ENCODE measurements at regions of chr6 and their contacts with region 1.

Region 1: GRCh38 chr6:57089687-57090460 is at the start of gene ZNF451:
- DNase-seq: peak; percentile 96 to 97
- ATAC-seq: peak; percentile 96 to 97
- H3K4me3 ChIP-seq: peak within 1 kb of the TSS; percentile 61 to 77 (median 68)
- H3K27ac ChIP-seq: peak within 1 kb of the TSS; percentile 81 to 89 (median 86)
- H3K4me1 ChIP-seq: peaks cover 26 to 28% of the 10 kb centered on the region in 2 donors
- H3K27me3 ChIP-seq: no peaks in the 10 kb centered on the region
- CTCF ChIP-seq: peak in 3 of 5 experiments; percentile 11 to 15 (median 13)
- POLR2A ChIP-seq: peak; percentile 87 to 93
- total RNA-seq, gene ZNF451: 27.1 to 36.8 (median 28.0) TPM

Region 2: DNA sequence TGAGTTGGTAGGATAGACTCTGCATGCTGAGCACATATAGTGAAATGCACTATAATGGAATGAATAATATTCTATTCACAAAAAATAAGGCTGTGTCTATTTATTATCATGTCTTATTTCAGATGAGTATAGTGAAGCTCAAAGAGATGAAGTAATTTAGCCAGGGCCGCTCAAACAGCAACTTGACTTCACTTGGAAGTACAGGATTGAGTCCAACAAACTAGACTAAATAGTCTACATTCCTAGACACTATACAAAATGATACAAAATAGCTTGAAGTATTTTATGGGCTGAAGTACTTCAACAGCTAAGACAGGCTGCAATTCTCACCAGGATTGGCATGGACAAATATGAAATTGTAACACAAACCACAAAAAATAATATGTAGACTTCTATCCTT is 302.7 kb before region 1 on chr6:
- in situ Hi-C with region 1: no loop called
- intact Hi-C with region 1: no loop called
- DNase-seq: no peak
- ATAC-seq: no peak
- H3K4me3 ChIP-seq: no peak overlapping the region
- H3K27ac ChIP-seq: peak overlapping the region in 1 of 4 donors; percentile 28
- H3K4me1 ChIP-seq: peaks cover 38 to 41% of the 10 kb centered on the region in 2 donors
- H3K27me3 ChIP-seq: no peaks in the 10 kb centered on the region
- CTCF ChIP-seq: no peak
- POLR2A ChIP-seq: no peak

Region 3: GRCh38 chr6:56955171-56956045 is 134.5 kb before region 1 on chr6:
- in situ Hi-C with region 1: no loop called
- intact Hi-C with region 1: loop called (anchors 10 kb)
- DNase-seq: peak; percentile 40 to 71
- ATAC-seq: peak; percentile 87 to 89
- H3K4me3 ChIP-seq: peak overlapping the region; percentile 41 to 80 (median 58)
- H3K27ac ChIP-seq: peak overlapping the region in 1 of 4 donors; percentile 28
- H3K4me1 ChIP-seq: peaks cover 8 to 15% of the 10 kb centered on the region in 2 donors
- H3K27me3 ChIP-seq: no peaks in the 10 kb centered on the region
- CTCF ChIP-seq: peak; percentile 39 to 75 (median 64)
- POLR2A ChIP-seq: no peak

Region 4: DNA sequence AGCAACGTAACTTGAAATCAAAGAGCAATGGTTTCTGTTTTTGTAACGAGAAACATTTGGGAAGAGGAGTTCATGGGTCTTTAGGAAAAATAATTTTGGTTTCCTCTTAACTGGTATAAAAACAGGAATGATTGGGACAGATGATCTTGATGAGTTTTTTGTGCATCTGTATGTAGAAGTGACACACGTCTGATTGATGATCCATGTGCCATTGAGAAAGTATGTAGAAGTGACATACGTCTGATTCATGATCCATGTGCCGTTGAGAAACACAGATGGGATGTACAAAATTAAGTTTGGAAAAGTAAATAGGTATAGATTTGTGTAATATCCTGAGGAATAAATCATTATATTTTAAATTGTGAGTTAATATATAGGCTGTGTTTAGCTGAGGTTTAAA is 41.3 kb before region 1 on chr6:
- in situ Hi-C with region 1: no loop called
- intact Hi-C with region 1: loop called (anchors 5 kb)
- DNase-seq: no peak
- ATAC-seq: no peak
- H3K4me3 ChIP-seq: no peak overlapping the region
- H3K27ac ChIP-seq: no peak overlapping the region
- H3K4me1 ChIP-seq: peaks cover 10 to 13% of the 10 kb centered on the region in 2 donors
- H3K27me3 ChIP-seq: no peaks in the 10 kb centered on the region
- CTCF ChIP-seq: no peak
- POLR2A ChIP-seq: no peak

Region 5: DNA sequence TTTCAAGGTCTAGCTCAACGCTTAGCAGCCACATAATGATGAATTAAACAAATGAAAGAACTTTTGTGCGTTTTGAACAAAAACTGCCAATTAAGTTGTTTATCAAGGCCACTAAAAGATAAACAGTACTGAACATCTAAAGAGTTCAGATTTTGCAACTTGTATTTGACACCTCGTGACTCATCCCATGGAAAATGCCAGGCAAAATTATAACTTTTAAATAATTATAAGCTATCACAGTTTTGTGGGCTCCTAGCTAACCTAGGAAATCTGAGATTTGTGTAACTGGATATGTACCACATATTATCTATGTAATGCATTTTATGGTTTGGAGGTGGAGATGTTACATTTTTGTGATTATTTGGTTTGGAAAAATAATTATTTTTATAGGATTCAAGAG is 72.6 kb after region 1 on chr6:
- in situ Hi-C with region 1: loop called in 1 of 4 experiments (anchors 10 kb)
- intact Hi-C with region 1: no loop called
- DNase-seq: no peak
- ATAC-seq: no peak
- H3K4me3 ChIP-seq: no peak overlapping the region
- H3K27ac ChIP-seq: no peak overlapping the region
- H3K4me1 ChIP-seq: no peaks in the 10 kb centered on the region
- H3K27me3 ChIP-seq: no peaks in the 10 kb centered on the region
- CTCF ChIP-seq: no peak
- POLR2A ChIP-seq: no peak

Region 6: DNA sequence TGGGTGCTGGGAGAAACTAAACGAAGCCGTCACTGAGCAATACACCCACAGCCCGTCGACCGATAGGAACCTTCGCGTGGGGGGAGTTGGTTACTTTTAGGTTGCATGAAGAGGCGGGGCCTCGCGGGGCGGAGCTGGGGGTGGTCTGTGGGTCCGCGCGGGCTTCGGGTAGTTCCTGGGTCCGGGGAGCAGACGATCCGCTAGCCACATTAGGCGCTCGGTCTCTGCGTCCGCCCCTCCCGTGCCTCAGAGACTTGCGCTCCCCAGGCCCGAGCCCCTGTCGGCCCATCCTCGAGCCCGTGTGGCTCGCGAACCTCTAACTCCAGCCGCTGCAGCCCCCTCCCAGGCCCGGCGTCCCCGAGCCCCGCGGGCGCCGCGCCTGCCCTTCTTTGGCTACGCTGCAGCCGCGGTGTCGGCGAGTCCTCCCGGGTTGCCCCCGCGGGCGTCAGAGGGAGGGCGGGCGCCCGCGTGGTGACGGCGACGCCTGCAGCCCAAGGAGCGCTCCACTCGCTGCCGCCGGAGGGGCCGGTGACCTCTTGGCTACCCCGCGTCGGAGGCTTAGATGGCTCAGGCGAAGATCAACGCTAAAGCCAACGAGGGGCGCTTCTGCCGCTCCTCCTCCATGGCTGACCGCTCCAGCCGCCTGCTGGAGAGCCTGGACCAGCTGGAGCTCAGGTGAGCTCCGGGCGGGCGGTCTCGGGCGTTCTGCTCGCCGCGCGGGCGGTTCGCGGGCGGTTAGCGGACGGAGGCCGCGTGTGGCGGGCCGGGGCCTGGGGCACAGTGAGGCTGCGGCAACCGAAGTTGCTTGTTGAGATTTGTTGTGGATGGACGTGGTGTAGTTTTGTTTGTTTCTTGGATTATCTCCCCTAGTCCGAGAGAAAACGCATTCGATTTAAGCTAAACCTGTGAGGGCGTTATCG is 82.5 kb after region 1 on chr6 and contains the start of gene BAG2:
- in situ Hi-C with region 1: loop called in 1 of 4 experiments (anchors 10 kb)
- intact Hi-C with region 1: loop called (anchors 5 kb)
- DNase-seq: peak; percentile 68 to 88
- ATAC-seq: peak; percentile 88 to 90
- H3K4me3 ChIP-seq: peak within 1 kb of the TSS; percentile 79 to 88 (median 82)
- H3K27ac ChIP-seq: peak within 1 kb of the TSS; percentile 90 to 95 (median 92)
- H3K4me1 ChIP-seq: peaks cover 38 to 41% of the 10 kb centered on the region in 2 donors
- H3K27me3 ChIP-seq: no peaks in the 10 kb centered on the region
- CTCF ChIP-seq: peak in 2 of 5 experiments; percentile 28 to 38
- POLR2A ChIP-seq: peak; percentile 64 to 75
- total RNA-seq, gene BAG2: 6.7 to 15.7 (median 9.8) TPM